ENCODE measurements at regions of chr5 and their contacts with region 1.

Region 1: GRCh38 chr5:57221049-57221568 is 47.2 kb downstream of the GPBP1 start:
- DNase-seq: no peak
- H3K4me3 ChIP-seq: no peak overlapping the region
- H3K27ac ChIP-seq: no peak overlapping the region
- H3K4me1 ChIP-seq: peaks cover 0 to 17% (median 7%) of the 10 kb centered on the region in 3 donors
- H3K27me3 ChIP-seq: no peaks in the 10 kb centered on the region
- CTCF ChIP-seq: peak; percentile 75 to 97 (median 93)
- POLR2A ChIP-seq: no peak

Region 2: DNA sequence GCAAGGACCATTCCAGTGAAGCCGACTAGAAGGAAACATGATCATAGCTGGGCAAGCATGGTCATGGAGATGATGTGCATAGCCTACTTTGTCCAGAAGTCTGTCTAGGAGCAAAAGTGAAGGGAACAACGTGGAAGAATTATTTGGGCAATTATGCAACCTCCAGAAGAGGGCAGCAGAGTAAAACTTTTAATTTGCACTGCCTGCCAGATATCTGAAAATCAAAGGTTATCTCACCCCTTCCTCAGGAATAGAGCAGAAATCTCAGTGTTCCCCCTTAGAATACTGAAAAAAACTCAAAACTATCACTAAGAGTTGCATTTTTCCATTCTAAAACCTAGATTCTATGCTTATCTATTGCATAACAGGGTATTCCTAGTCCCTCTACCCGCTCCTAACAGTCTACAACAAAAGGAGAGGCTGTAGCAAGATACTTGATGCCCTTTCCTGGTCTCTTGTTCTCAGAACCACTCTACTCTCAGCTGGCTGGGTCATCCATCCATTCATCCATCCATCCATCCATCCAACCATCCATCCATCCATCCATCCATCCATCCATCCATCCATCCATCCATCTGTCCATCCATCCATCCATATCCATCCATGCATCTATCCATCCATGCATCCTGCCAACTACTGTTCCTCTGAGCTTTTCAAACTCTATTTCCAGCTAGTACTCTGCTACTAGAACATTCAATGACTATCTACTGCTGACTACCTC is 320.1 kb before region 1 on chr5:
- intact Hi-C with region 1: loop called (anchors 5 kb)
- DNase-seq: no peak
- H3K4me3 ChIP-seq: no peak overlapping the region
- H3K27ac ChIP-seq: no peak overlapping the region
- H3K4me1 ChIP-seq: peaks cover 0 to 5% (median 0%) of the 10 kb centered on the region in 3 donors
- H3K27me3 ChIP-seq: no peaks in the 10 kb centered on the region
- CTCF ChIP-seq: peak; percentile 54 to 73 (median 62)
- POLR2A ChIP-seq: no peak

Region 3: GRCh38 chr5:57383093-57383861 is 162.2 kb after region 1 on chr5:
- intact Hi-C with region 1: no loop called
- DNase-seq: no peak
- H3K4me3 ChIP-seq: no peak overlapping the region
- H3K27ac ChIP-seq: no peak overlapping the region
- H3K4me1 ChIP-seq: peaks cover 0 to 8% (median 4%) of the 10 kb centered on the region in 3 donors
- H3K27me3 ChIP-seq: no peaks in the 10 kb centered on the region
- CTCF ChIP-seq: peak in 1 of 6 experiments; percentile 16
- POLR2A ChIP-seq: no peak

Measured in esophagus squamous epithelium (tissue), 5 donors.